PC-9 (cell line): ENCODE measurements at regions of chr1 and their contacts with region 1.

Region 1: DNA sequence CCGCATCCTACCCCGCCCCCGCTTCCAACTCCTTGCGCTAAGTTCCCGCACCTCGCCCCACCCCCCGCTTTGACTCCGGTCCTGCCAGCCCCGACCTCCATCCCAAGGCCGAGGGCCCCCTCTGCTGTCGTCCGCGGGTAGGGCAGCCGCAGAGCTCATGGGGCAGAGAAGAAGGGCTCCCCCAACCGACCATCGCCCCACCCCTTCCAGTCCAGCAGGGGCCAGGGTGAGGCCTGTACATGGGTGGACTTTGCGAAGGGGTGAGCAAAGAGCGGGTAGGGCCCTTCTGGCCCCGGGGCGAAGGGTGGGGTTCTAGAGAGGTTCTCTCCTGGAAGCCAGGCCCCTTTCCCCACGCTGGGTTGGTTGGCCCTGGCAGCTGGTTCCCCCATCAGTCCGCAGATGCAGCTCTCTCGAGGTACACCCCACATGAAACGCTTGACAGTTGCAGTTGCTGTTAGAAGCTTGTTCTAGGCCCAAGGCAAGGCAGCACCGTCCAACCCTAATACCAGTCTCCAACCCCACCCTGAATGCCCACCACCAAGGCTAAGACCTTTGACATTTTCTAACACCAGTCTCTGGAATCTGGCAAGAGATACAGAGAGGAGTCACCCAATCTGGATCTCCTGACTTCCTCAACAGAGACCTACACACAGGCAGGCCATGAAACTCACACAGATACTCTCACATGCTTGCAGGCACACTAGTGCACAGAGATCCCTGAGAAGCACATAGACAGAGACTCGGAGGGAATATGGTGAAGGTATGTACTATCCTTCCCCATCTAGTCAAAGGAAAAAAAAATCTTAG is 25.3 kb upstream of the ADGRB2 start:
- DNase-seq: peak; percentile 86 to 96
- H3K4me3 ChIP-seq: peak overlapping the region; percentile 65
- H3K27ac ChIP-seq: no peak overlapping the region
- H3K4me1 ChIP-seq: peaks cover 10% of the 10 kb centered on the region; the same call in 1 of the 2 replicates
- H3K27me3 ChIP-seq: no peaks in the 10 kb centered on the region
- CTCF ChIP-seq: peak; percentile 100

Region 2: DNA sequence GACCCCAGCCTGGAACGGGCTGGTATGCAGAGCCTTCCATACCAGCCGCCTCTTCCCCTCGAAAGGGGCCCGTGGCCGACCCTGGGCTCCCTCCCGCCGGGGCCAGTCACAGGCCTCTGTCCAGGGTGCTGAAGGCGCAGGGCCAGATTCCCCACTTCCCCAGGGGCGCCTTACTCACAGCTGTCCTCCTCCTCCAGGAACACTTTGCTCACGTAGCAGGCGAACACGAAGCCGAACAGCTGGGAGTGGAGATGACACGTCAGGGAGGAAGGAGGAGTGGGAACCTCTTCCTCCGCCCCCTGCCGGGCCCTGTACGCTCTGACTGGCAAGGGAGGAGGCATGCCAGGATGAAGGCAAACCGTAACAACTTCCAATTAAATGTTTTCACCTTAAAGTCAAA is 607.1 kb before region 1 on chr1:
- CTCF ChIA-PET with region 1: no interaction called
- POLR2A ChIA-PET with region 1: no interaction called
- intact Hi-C with region 1: loop called (anchors 10 kb)
- DNase-seq: peak; percentile 73 to 77
- H3K4me3 ChIP-seq: no peak overlapping the region; the same call in 1 of the 2 replicates
- H3K27ac ChIP-seq: no peak overlapping the region
- H3K4me1 ChIP-seq: no peaks in the 10 kb centered on the region
- H3K27me3 ChIP-seq: no peaks in the 10 kb centered on the region
- CTCF ChIP-seq: peak; percentile 52

Region 3: DNA sequence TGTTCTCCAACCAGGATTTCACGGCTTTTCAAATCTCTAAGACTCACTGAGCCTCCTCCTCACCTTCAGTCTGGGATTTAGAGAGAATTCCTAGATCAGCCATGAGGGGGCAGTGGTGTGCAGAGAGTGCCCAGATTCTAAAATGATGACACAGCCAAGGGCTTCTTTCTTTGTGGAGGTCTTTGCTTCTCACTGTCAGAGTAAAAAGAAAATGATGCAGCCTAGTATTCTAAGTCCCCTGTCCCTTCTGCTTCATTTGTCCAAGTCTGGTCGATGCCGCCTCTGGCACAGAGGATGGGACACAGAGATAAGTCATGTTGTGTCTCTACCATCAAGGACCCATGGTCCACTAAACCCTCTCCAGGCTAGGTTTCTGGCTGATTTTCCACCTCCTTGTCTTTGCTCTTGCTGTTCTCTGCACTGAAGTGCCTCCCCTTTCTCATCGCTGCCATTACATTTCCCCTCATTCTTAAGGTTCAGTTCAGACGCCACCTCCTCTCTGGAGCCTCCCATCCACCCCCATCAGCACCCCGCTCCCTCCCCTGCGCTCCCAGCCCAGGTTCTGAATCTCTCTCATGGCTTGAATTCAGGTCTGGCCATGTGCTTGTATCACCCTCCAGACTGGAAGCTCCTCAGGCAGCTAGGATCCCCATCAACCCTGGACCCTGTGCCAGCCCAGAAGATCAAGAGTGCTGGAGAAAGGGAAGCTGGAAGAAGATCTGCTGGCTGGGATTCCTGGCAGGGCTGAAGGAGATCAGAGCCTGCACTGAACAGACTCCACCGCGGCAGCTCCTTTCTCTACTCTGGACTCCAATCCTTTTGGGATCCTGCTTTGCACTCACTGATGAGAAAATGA is 225.1 kb before region 1 on chr1:
- CTCF ChIA-PET with region 1: no interaction called
- POLR2A ChIA-PET with region 1: no interaction called
- intact Hi-C with region 1: loop called (anchors 2 kb)
- DNase-seq: peak; percentile 64 to 67
- H3K4me3 ChIP-seq: no peak overlapping the region
- H3K27ac ChIP-seq: peak overlapping the region; percentile 93
- H3K4me1 ChIP-seq: peaks cover 44% of the 10 kb centered on the region
- H3K27me3 ChIP-seq: no peaks in the 10 kb centered on the region
- CTCF ChIP-seq: peak; percentile 100

Region 4: GRCh38 chr1:31663622-31664452 is 125.6 kb before region 1 on chr1:
- CTCF ChIA-PET with region 1: interaction called, 11 read pairs
- POLR2A ChIA-PET with region 1: interaction called, 4 read pairs
- intact Hi-C with region 1: loop called (anchors 1 kb)
- DNase-seq: peak in 1 of 2 experiments; percentile 67
- H3K4me3 ChIP-seq: no peak overlapping the region
- H3K27ac ChIP-seq: no peak overlapping the region
- H3K4me1 ChIP-seq: peaks cover 18% of the 10 kb centered on the region
- H3K27me3 ChIP-seq: no peaks in the 10 kb centered on the region
- CTCF ChIP-seq: peak; percentile 100

Region 5: DNA sequence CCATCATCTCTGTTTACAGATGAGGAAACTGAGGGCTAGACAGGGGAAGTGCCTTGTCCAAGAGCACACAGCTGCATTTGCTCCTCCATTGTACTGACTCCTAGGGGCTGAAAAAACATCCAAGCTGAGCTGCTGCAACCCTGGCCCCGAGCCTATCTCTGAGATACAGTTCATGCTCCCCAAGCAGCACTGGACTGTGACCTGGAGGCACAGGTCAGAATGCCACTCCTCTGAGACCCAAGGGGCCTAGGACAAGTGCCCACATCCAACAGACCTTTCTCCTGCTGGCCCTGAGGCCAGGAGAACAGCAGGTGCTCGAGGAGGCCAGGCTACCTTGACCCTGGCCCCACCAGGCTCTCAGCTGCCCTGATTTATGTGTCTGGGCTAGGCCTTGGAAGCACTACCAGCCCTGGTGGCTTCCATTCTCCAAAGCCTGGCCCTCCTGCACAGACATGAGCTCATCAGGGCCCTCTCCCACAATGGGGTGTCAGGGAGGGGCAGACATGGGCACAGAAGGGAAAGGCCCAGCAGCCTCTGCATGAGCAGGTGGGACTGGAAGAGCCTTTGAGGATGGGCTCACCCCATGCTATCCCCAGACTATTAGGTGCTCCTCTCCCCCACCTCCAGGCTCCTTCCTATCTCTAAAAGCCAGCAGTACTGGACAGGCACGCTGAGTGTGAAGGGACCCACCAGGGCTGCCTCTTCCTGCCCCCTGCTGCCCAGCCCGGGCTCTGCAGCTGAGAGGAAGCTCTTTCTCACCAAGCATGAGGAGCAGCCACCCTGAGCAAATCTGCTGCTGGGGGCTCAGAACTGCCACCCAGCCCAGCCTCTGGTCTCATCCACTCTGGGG is 44.1 kb before region 1 on chr1:
- CTCF ChIA-PET with region 1: interaction called, 14 read pairs
- POLR2A ChIA-PET with region 1: no interaction called
- intact Hi-C with region 1: no loop called
- DNase-seq: peak; percentile 61 to 68
- H3K4me3 ChIP-seq: no peak overlapping the region
- H3K27ac ChIP-seq: no peak overlapping the region
- H3K4me1 ChIP-seq: no peaks in the 10 kb centered on the region
- H3K27me3 ChIP-seq: no peaks in the 10 kb centered on the region
- CTCF ChIP-seq: peak; percentile 98

Region 6: GRCh38 chr1:31839662-31840343 is 50.3 kb after region 1 on chr1:
- CTCF ChIA-PET with region 1: no interaction called
- POLR2A ChIA-PET with region 1: no interaction called
- intact Hi-C with region 1: no loop called
- DNase-seq: no peak
- H3K4me3 ChIP-seq: no peak overlapping the region
- H3K27ac ChIP-seq: no peak overlapping the region
- H3K4me1 ChIP-seq: no peaks in the 10 kb centered on the region
- H3K27me3 ChIP-seq: no peaks in the 10 kb centered on the region
- CTCF ChIP-seq: no peak

Region 7: DNA sequence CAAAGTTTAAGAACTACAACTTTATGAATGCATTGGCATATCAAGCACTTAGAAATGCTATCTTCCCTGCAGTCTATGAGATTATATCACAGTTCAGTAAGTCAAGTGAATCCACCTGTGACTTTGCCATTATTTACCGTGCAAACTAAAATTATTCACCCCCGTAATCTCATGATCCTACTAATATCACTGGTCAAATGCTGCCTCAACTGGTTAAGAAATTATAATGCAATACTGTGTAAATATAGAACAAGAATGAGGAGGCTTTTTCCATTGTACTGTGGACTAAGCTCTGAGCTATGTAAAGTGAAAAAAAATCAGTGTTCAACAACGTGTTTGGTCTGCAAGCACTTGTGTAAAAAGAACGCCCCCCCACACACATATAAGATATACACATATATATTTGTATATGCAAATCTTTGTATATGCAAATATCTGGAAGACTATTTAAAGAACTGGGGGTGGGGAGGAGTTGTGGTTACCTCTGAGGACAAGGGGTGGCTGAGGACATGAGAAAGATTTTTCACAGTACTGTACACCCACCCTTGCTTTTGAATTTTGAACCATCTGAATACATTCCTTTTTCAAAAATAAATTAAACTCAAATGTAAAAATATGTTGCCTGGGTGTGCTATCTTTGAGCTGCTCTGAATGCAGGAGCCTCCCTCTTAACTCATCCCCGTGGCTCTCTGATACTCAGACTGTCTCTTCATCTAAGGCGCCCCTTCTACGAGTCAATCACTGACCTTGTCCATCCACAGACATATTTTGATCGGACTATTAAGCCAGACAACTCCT is 91.6 kb after region 1 on chr1:
- CTCF ChIA-PET with region 1: no interaction called
- POLR2A ChIA-PET with region 1: no interaction called
- intact Hi-C with region 1: no loop called
- DNase-seq: no peak
- H3K4me3 ChIP-seq: no peak overlapping the region
- H3K27ac ChIP-seq: no peak overlapping the region
- H3K4me1 ChIP-seq: no peaks in the 10 kb centered on the region
- H3K27me3 ChIP-seq: no peaks in the 10 kb centered on the region
- CTCF ChIP-seq: no peak

Region 8: GRCh38 chr1:31970873-31971272 is 181.4 kb after region 1 on chr1:
- CTCF ChIA-PET with region 1: no interaction called
- POLR2A ChIA-PET with region 1: interaction called, 17 read pairs
- intact Hi-C with region 1: no loop called
- DNase-seq: no peak
- H3K4me3 ChIP-seq: no peak overlapping the region
- H3K27ac ChIP-seq: no peak overlapping the region
- H3K4me1 ChIP-seq: no peaks in the 10 kb centered on the region
- H3K27me3 ChIP-seq: no peaks in the 10 kb centered on the region
- CTCF ChIP-seq: no peak